Natural killer cell (primary cell): ENCODE measurements at regions of chr22 and their contacts with region 1.

Region 1: GRCh38 chr22:26589845-26590736 is at the start of gene TPST2:
- DNase-seq: peak; percentile 79 to 91
- ATAC-seq: peak; percentile 73 to 89 (median 77)
- H3K4me3 ChIP-seq: peak within 1 kb of the TSS; percentile 83
- H3K4me3 Mint-ChIP-seq: peak within 1 kb of the TSS; percentile 94
- H3K27ac ChIP-seq: peak within 1 kb of the TSS; percentile 81
- H3K27ac Mint-ChIP-seq: peak within 1 kb of the TSS; percentile 92 to 94
- H3K4me1 ChIP-seq: peaks cover 83% of the 10 kb centered on the region
- H3K4me1 Mint-ChIP-seq: peaks cover 66 to 77% of the 10 kb centered on the region in 2 donors
- H3K27me3 ChIP-seq: no peaks in the 10 kb centered on the region
- H3K27me3 Mint-ChIP-seq: no peaks in the 10 kb centered on the region
- CTCF ChIP-seq: no peak
- total RNA-seq, gene TPST2: 145 to 206 (median 155) TPM

Region 2: GRCh38 chr22:26502688-26503561 is 87.2 kb before region 1 on chr22:
- intact Hi-C with region 1: loop called (anchors 5 kb)
- DNase-seq: peak; percentile 57 to 84
- ATAC-seq: peak; percentile 88 to 91 (median 89)
- H3K4me3 ChIP-seq: no peak overlapping the region
- H3K4me3 Mint-ChIP-seq: peak overlapping the region; percentile 79
- H3K27ac ChIP-seq: peak overlapping the region; percentile 63
- H3K27ac Mint-ChIP-seq: peak overlapping the region; percentile 87 to 93
- H3K4me1 ChIP-seq: peaks cover 19% of the 10 kb centered on the region
- H3K4me1 Mint-ChIP-seq: peaks cover 26% of the 10 kb centered on the region in 2 donors
- H3K27me3 ChIP-seq: no peaks in the 10 kb centered on the region
- H3K27me3 Mint-ChIP-seq: no peaks in the 10 kb centered on the region
- CTCF ChIP-seq: peak; percentile 63

Region 3: GRCh38 chr22:26529345-26529744 is 60.7 kb before region 1 on chr22:
- intact Hi-C with region 1: no loop called
- DNase-seq: no peak
- ATAC-seq: no peak
- H3K4me3 ChIP-seq: no peak overlapping the region
- H3K4me3 Mint-ChIP-seq: no peak overlapping the region
- H3K27ac ChIP-seq: no peak overlapping the region
- H3K27ac Mint-ChIP-seq: peak overlapping the region in 1 of 2 donors; percentile 33
- H3K4me1 ChIP-seq: no peaks in the 10 kb centered on the region
- H3K4me1 Mint-ChIP-seq: peaks cover 4 to 8% of the 10 kb centered on the region in 2 donors
- H3K27me3 ChIP-seq: no peaks in the 10 kb centered on the region
- H3K27me3 Mint-ChIP-seq: no peaks in the 10 kb centered on the region
- CTCF ChIP-seq: no peak

Region 4: GRCh38 chr22:26547426-26547825 is 42.7 kb before region 1 on chr22:
- intact Hi-C with region 1: loop called (anchors 5 kb)
- DNase-seq: peak; percentile 21 to 27
- ATAC-seq: peak; percentile 53 to 75 (median 73)
- H3K4me3 ChIP-seq: no peak overlapping the region
- H3K4me3 Mint-ChIP-seq: peak overlapping the region; percentile 54
- H3K27ac ChIP-seq: peak overlapping the region; percentile 44
- H3K27ac Mint-ChIP-seq: peak overlapping the region; percentile 81 to 91
- H3K4me1 ChIP-seq: peaks cover 90% of the 10 kb centered on the region
- H3K4me1 Mint-ChIP-seq: peaks cover 82 to 87% of the 10 kb centered on the region in 2 donors
- H3K27me3 ChIP-seq: no peaks in the 10 kb centered on the region
- H3K27me3 Mint-ChIP-seq: no peaks in the 10 kb centered on the region
- CTCF ChIP-seq: no peak

Region 5: GRCh38 chr22:26570115-26570514 is 20.0 kb before region 1 on chr22:
- intact Hi-C with region 1: loop called (anchors 2 kb)
- DNase-seq: no peak
- ATAC-seq: no peak
- H3K4me3 ChIP-seq: no peak overlapping the region
- H3K4me3 Mint-ChIP-seq: peak overlapping the region; percentile 78
- H3K27ac ChIP-seq: peak overlapping the region; percentile 47
- H3K27ac Mint-ChIP-seq: peak overlapping the region; percentile 88 to 94
- H3K4me1 ChIP-seq: peaks cover 92% of the 10 kb centered on the region
- H3K4me1 Mint-ChIP-seq: peaks cover 94 to 100% of the 10 kb centered on the region in 2 donors
- H3K27me3 ChIP-seq: no peaks in the 10 kb centered on the region
- H3K27me3 Mint-ChIP-seq: no peaks in the 10 kb centered on the region
- CTCF ChIP-seq: no peak

Region 6: GRCh38 chr22:26617271-26618199 is 27.4 kb after region 1 on chr22 and contains the start of gene CRYBB1:
- intact Hi-C with region 1: no loop called
- DNase-seq: no peak
- ATAC-seq: no peak
- H3K4me3 ChIP-seq: no peak within 1 kb of the TSS
- H3K4me3 Mint-ChIP-seq: no peak within 1 kb of the TSS
- H3K27ac ChIP-seq: no peak within 1 kb of the TSS
- H3K27ac Mint-ChIP-seq: peak within 1 kb of the TSS; percentile 2 to 5
- H3K4me1 ChIP-seq: peaks cover 34% of the 10 kb centered on the region
- H3K4me1 Mint-ChIP-seq: peaks cover 34 to 61% of the 10 kb centered on the region in 2 donors
- H3K27me3 ChIP-seq: no peaks in the 10 kb centered on the region
- H3K27me3 Mint-ChIP-seq: no peaks in the 10 kb centered on the region
- CTCF ChIP-seq: no peak
- total RNA-seq, gene CRYBB1: not detected

Region 7: GRCh38 chr22:26642465-26643417 is 52.6 kb after region 1 on chr22:
- intact Hi-C with region 1: loop called (anchors 1 kb)
- DNase-seq: peak; percentile 72 to 83
- ATAC-seq: peak; percentile 75 to 80 (median 80)
- H3K4me3 ChIP-seq: no peak overlapping the region
- H3K4me3 Mint-ChIP-seq: peak overlapping the region; percentile 91
- H3K27ac ChIP-seq: peak overlapping the region; percentile 87
- H3K27ac Mint-ChIP-seq: peak overlapping the region; percentile 94 to 99
- H3K4me1 ChIP-seq: peaks cover 56% of the 10 kb centered on the region
- H3K4me1 Mint-ChIP-seq: peaks cover 75 to 76% of the 10 kb centered on the region in 2 donors
- H3K27me3 ChIP-seq: no peaks in the 10 kb centered on the region
- H3K27me3 Mint-ChIP-seq: no peaks in the 10 kb centered on the region
- CTCF ChIP-seq: peak; percentile 23

Region 8: GRCh38 chr22:26672590-26673468 is 82.7 kb after region 1 on chr22:
- intact Hi-C with region 1: loop called (anchors 5 kb)
- DNase-seq: peak; percentile 87 to 97
- ATAC-seq: peak; percentile 60 to 87 (median 77)
- H3K4me3 ChIP-seq: peak overlapping the region; percentile 65
- H3K4me3 Mint-ChIP-seq: peak overlapping the region; percentile 96
- H3K27ac ChIP-seq: peak overlapping the region; percentile 91
- H3K27ac Mint-ChIP-seq: peak overlapping the region; percentile 95 to 99
- H3K4me1 ChIP-seq: peaks cover 86% of the 10 kb centered on the region
- H3K4me1 Mint-ChIP-seq: peaks cover 80 to 88% of the 10 kb centered on the region in 2 donors
- H3K27me3 ChIP-seq: no peaks in the 10 kb centered on the region
- H3K27me3 Mint-ChIP-seq: no peaks in the 10 kb centered on the region
- CTCF ChIP-seq: no peak

Region 9: GRCh38 chr22:26722159-26722558 is 132.1 kb after region 1 on chr22:
- intact Hi-C with region 1: no loop called
- DNase-seq: no peak
- ATAC-seq: no peak
- H3K4me3 ChIP-seq: no peak overlapping the region
- H3K4me3 Mint-ChIP-seq: no peak overlapping the region
- H3K27ac ChIP-seq: no peak overlapping the region
- H3K27ac Mint-ChIP-seq: no peak overlapping the region
- H3K4me1 ChIP-seq: no peaks in the 10 kb centered on the region
- H3K4me1 Mint-ChIP-seq: peaks cover 3 to 35% of the 10 kb centered on the region in 2 donors
- H3K27me3 ChIP-seq: no peaks in the 10 kb centered on the region
- H3K27me3 Mint-ChIP-seq: no peaks in the 10 kb centered on the region
- CTCF ChIP-seq: no peak